ENCODE measurements at regions of chr2 and their contacts with region 1.

Region 1: GRCh38 chr2:152025678-152026287 is 73.1 kb downstream of the CACNB4 start:
- DNase-seq: peak; percentile 65
- CTCF ChIP-seq: peak; percentile 99

Region 2: DNA sequence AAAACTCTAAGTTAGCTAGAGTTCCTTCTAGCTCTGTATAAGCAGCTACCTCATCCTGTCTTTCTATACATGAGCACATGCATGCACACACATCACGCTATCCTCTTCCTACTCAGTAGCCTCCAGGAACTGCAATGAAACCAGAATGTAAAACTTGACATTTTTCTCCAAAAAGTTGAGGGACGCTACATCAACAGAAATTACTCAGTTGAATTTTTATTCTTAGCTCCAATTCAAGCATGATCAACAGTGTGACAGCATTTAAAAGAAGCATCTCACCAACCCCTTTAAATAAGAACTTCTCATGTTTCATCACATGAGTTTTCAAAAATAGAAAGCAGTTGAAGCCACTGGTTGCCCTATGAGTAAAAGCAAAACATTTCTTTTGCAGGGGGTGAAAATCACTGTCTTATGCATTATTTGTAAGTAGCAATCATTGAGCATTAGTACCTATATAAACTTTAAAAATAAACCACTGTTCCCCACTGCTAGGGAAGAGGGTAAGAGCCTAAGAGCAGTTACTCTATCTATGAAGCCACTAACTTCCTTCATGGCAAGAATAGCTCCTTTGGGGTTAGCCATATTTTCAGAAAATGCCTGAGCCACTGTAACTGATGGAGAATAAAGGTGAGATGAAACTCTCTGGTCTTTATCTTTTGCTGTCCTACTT is 119.7 kb before region 1 on chr2:
- CTCF ChIA-PET with region 1: interaction called, 13 read pairs
- POLR2A ChIA-PET with region 1: no interaction called
- DNase-seq: peak; percentile 18
- CTCF ChIP-seq: no peak

Region 3: GRCh38 chr2:151979694-151980093 is 46.1 kb before region 1 on chr2:
- CTCF ChIA-PET with region 1: interaction called, 17 read pairs
- POLR2A ChIA-PET with region 1: no interaction called
- DNase-seq: no peak
- CTCF ChIP-seq: no peak

Region 4: GRCh38 chr2:151999053-151999452 is 26.7 kb before region 1 on chr2:
- CTCF ChIA-PET with region 1: interaction called, 66 read pairs
- POLR2A ChIA-PET with region 1: no interaction called
- DNase-seq: peak; percentile 73
- CTCF ChIP-seq: peak; percentile 86

Region 5: GRCh38 chr2:152012697-152013096 is 13.1 kb before region 1 on chr2:
- CTCF ChIA-PET with region 1: interaction called, 105 read pairs
- POLR2A ChIA-PET with region 1: no interaction called
- DNase-seq: no peak
- CTCF ChIP-seq: no peak

Region 6: DNA sequence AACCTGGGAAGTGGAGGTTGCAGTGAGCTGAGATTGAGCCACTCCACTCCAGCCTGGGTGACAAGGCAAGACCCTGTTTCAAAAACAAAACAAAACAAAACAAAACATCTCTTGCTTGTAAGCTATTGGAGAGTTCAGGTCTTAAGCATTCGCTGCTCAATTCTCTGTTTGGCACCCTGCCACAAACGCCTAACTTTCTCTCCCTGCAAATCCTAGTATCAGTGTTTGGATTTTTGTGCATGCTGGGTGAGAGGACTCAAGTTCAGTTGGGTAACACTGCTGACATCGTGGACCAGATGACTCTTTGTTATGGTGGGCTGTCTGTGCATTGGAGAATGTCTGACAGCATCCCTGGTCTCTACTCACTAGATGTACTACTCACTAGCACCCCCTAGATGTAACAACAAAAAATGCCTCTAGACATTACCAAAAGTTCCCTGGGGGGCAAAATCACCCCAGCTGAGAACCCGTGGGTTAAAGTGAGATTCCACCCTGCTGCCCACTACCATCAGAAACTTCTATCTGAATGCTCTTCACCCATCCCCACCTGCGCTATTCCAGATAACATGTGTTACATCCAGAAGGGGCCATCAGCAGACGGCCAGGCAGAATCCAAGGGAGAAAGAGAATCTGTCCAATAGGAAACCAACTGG is 22.2 kb after region 1 on chr2:
- CTCF ChIA-PET with region 1: interaction called, 51 read pairs
- POLR2A ChIA-PET with region 1: no interaction called
- DNase-seq: no peak
- CTCF ChIP-seq: peak; percentile 45

Measured in GM10248 (cell line).